ENCODE measurements at regions of chr19 and their contacts with region 1.

Region 1: DNA sequence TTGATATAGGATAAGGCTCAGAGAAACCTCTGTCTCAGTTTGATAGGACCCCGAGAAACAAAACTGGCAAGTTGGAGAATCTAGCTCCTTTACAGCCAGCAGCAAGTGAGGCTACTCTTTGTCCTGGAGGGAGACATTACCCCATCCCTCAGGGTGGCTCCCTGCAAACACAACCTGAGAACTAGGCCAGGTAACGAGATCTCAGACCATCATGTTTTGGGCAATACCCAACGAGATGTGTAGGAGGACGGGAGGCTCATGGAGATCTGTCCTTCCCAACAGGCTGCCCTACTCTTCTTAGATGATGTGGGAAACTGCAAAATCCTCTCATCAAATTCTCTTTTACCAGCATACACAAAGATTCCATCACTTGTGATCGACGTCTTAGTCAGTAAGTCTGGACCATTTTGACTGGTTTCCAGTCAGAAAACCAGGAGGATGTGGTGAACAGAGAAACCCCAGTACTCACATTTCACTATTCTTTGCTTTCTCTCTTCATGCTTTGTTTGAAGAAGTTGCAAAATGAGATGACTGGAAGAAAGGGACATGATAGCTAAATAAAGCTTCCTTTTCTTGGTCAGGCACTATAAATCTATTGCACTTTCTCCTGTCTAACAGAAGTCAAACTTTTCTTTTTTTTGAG is 6.0 kb upstream of the CTU1 start:
- DNase-seq: peak; percentile 23
- H3K4me3 Mint-ChIP-seq: peak overlapping the region; percentile 4
- H3K27ac Mint-ChIP-seq: peak overlapping the region; percentile 77
- H3K4me1 Mint-ChIP-seq: peaks cover 12% of the 10 kb centered on the region
- H3K27me3 Mint-ChIP-seq: peaks cover 6% of the 10 kb centered on the region

Region 2: GRCh38 chr19:50794439-50795237 is 319.6 kb before region 1 on chr19:
- intact Hi-C with region 1: no loop called
- DNase-seq: no peak
- H3K4me3 Mint-ChIP-seq: no peak overlapping the region
- H3K27ac Mint-ChIP-seq: peak overlapping the region; percentile 62
- H3K4me1 Mint-ChIP-seq: no peaks in the 10 kb centered on the region
- H3K27me3 Mint-ChIP-seq: no peaks in the 10 kb centered on the region

Region 3: DNA sequence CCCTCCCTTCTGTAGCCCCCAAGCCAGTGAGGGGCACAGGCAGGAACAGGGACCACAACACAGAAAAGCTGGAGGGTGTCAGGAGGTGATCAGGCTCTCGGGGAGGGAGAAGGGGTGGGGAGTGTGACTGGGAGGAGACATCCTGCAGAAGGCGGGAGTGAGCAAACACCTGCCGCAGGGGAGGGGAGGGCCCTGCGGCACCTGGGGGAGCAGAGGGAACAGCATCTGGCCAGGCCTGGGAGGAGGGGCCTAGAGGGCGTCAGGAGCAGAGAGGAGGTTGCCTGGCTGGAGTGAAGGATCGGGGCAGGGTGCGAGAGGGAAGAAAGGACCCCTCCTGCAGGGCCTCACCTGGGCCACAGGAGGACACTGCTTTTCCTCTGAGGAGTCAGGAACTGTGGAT is 255.3 kb before region 1 on chr19:
- intact Hi-C with region 1: no loop called
- DNase-seq: no peak
- H3K4me3 Mint-ChIP-seq: no peak overlapping the region
- H3K27ac Mint-ChIP-seq: no peak overlapping the region
- H3K4me1 Mint-ChIP-seq: no peaks in the 10 kb centered on the region
- H3K27me3 Mint-ChIP-seq: peaks cover 12% of the 10 kb centered on the region

Region 4: DNA sequence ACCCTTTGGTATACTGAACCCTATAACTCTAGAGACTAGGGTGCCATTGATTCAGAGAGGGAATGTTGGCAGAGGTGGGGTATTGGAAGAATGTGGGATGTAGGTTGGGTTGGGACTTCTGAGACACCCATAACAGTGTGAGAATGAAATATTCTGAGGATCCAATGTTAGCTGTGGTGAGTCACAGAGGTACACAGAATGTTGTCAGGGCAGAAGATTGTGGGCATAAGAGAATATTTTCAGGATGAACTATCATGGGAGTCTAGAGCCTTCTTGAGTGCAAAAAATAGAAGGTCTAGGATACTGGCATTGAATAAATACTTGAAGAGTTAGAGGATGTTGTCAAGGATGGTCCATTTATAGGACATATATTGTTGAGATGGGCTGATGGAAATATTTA is 58.3 kb before region 1 on chr19:
- intact Hi-C with region 1: no loop called
- DNase-seq: no peak
- H3K4me3 Mint-ChIP-seq: no peak overlapping the region
- H3K27ac Mint-ChIP-seq: no peak overlapping the region
- H3K4me1 Mint-ChIP-seq: no peaks in the 10 kb centered on the region
- H3K27me3 Mint-ChIP-seq: peaks cover 4% of the 10 kb centered on the region

Region 5: DNA sequence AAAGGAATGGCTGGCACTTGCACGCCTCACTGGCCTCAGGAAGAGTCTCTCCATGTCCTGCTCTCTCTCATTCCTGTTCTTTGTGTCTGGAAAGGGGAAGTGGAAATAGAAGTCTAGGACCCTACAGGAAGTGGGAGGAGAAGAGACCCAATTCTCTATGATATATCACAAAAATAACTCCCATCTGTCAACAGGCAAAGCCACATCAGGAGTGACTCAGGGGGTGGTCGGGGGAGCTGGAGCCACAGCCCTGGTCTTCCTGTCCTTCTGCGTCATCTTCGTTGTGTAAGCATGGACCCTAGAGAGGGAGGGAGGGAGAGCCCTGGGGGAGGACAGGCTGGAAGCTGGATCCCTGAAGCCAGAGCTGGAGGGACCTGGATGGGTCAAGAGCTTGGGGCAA is 13.5 kb after region 1 on chr19:
- intact Hi-C with region 1: loop called (anchors 1 kb)
- DNase-seq: no peak
- H3K4me3 Mint-ChIP-seq: no peak overlapping the region
- H3K27ac Mint-ChIP-seq: no peak overlapping the region
- H3K4me1 Mint-ChIP-seq: peaks cover 39% of the 10 kb centered on the region
- H3K27me3 Mint-ChIP-seq: peaks cover 9% of the 10 kb centered on the region

Region 6: GRCh38 chr19:51158474-51159129 is 44.4 kb after region 1 on chr19:
- intact Hi-C with region 1: loop called (anchors 2 kb)
- DNase-seq: peak; percentile 60
- H3K4me3 Mint-ChIP-seq: no peak overlapping the region
- H3K27ac Mint-ChIP-seq: peak overlapping the region; percentile 41
- H3K4me1 Mint-ChIP-seq: peaks cover 9% of the 10 kb centered on the region
- H3K27me3 Mint-ChIP-seq: peaks cover 5% of the 10 kb centered on the region

Region 7: DNA sequence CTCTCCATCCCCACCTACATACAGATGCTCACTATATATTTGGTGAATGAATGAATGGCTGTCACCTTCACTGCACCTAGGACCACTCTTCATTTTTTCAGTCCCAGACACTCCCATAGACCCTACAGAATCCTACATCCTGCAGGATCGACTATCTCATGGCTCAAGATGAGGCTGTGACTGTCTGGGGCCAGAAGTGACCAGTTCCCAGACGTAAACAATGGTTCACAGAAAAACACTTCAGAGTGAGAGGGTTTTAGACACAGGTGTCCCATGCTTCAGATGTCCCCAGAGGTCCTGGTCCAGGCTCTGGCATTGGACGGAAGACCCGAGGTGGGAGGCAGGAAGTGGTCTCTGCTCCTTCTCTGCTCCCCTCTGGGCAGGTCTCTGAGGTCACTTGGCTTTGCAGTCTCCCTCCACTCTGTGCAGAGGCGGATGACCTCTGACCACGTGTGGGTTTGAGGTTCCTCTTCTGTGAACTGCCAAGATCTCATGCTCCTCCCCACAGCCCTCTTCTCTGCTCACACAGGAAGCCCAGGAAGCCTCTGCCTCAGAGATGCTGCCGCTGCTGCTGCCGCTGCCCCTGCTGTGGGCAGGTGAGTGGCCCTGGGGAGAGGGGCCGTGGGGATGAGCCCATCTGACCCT is 52.8 kb after region 1 on chr19:
- intact Hi-C with region 1: loop called (anchors 1 kb)
- DNase-seq: peak; percentile 28
- H3K4me3 Mint-ChIP-seq: peak overlapping the region; percentile 68
- H3K27ac Mint-ChIP-seq: no peak overlapping the region
- H3K4me1 Mint-ChIP-seq: peaks cover 36% of the 10 kb centered on the region
- H3K27me3 Mint-ChIP-seq: peaks cover 20% of the 10 kb centered on the region

Region 8: GRCh38 chr19:51203916-51204315 is 89.7 kb after region 1 on chr19:
- intact Hi-C with region 1: no loop called
- DNase-seq: no peak
- H3K4me3 Mint-ChIP-seq: no peak overlapping the region
- H3K27ac Mint-ChIP-seq: no peak overlapping the region
- H3K4me1 Mint-ChIP-seq: no peaks in the 10 kb centered on the region
- H3K27me3 Mint-ChIP-seq: peaks cover 14% of the 10 kb centered on the region

Region 9: GRCh38 chr19:51259348-51260245 is 145.4 kb after region 1 on chr19:
- intact Hi-C with region 1: loop called (anchors 1 kb)
- DNase-seq: peak; percentile 31
- H3K4me3 Mint-ChIP-seq: no peak overlapping the region
- H3K27ac Mint-ChIP-seq: no peak overlapping the region
- H3K4me1 Mint-ChIP-seq: peaks cover 41% of the 10 kb centered on the region
- H3K27me3 Mint-ChIP-seq: peaks cover 6% of the 10 kb centered on the region